Activated CD4-positive, alpha-beta memory T cell treated with anti-CD3 and anti-CD28 coated beads for 36 hours (primary cell): ENCODE measurements at regions of chr1 and their contacts with region 1.

Region 1: DNA sequence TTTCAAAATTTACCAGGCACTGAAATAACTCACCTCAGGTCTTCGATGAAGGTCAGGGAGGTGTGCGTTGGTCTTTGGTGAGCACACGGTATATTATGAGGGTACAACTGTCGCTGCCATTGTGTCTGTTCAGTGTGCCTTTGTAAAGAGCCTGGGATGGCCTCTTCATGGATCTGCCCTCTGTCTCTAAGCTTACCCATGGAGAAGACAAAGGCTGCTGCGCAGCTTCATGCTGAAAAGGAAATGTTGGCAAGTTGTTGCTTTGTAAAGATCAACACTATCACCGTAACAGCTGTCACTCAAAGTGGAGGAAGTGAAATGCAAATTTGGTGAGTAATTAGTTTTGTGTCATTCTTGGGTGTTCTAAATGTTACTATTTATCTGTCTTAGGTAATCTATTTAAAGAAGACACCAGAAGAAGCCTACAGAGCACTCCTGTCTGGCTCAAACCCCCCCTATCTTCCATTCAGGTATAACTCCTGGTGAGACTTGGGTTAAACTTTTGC is 71.6 kb downstream of the CDC14A start:
- DNase-seq: peak; percentile 33
- H3K4me3 Mint-ChIP-seq: peak overlapping the region; percentile 57
- H3K27ac Mint-ChIP-seq: peak overlapping the region; percentile 76
- H3K4me1 Mint-ChIP-seq: peaks cover 72% of the 10 kb centered on the region
- H3K27me3 Mint-ChIP-seq: no peaks in the 10 kb centered on the region

Region 2: DNA sequence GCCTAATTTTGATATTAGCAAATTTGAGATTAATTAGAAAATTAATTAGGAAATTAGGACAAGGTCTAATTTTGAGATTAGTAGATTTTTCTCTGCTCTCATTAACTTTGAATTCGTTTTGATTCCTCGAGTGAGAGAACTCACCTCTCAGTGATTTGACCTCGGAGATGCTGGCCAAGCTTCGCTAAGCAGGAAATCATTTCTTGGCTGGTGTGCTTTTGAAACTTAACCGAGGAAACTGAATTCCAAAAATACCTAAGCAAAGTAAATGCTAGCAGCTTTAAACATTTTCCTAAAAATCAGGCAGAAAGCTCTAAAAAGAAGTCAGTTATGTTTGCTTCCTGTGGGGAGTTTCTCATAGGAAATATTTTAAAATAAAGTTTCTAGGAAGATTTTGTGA is 36.7 kb before region 1 on chr1:
- CTCF ChIA-PET with region 1: interaction called, 6 read pairs
- POLR2A ChIA-PET with region 1: no interaction called
- intact Hi-C with region 1: loop called (anchors 2 kb)
- DNase-seq: no peak
- H3K4me3 Mint-ChIP-seq: peak overlapping the region; percentile 64
- H3K27ac Mint-ChIP-seq: peak overlapping the region; percentile 84
- H3K4me1 Mint-ChIP-seq: peaks cover 83% of the 10 kb centered on the region
- H3K27me3 Mint-ChIP-seq: no peaks in the 10 kb centered on the region

Region 3: DNA sequence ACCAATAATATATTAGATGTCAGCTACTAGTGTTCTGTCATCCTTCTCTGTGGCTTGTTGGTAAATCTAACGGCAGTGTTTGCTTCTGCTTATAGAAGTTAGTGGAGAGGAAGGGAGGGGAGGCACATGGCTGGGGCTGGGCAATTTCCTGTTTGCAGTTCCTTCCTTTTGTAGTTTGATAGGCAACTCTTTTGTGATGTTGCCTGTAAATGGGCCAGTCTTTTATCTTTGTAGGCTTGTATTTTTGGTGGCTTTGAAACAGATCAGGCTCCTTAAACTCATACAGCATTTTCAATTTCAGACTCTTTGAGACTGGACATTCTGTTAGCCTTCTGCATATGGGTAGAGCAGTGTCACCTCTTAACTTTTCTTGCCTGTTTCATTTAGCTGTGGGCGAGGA is 23.5 kb before region 1 on chr1:
- CTCF ChIA-PET with region 1: interaction called, 8 read pairs
- POLR2A ChIA-PET with region 1: interaction called, 6 read pairs
- intact Hi-C with region 1: loop called (anchors 1 kb)
- DNase-seq: peak; percentile 67
- H3K4me3 Mint-ChIP-seq: peak overlapping the region; percentile 53
- H3K27ac Mint-ChIP-seq: peak overlapping the region; percentile 91
- H3K4me1 Mint-ChIP-seq: peaks cover 83% of the 10 kb centered on the region
- H3K27me3 Mint-ChIP-seq: no peaks in the 10 kb centered on the region

Region 4: GRCh38 chr1:100474834-100475233 is 50.9 kb after region 1 on chr1:
- CTCF ChIA-PET with region 1: no interaction called
- POLR2A ChIA-PET with region 1: no interaction called
- intact Hi-C with region 1: no loop called
- DNase-seq: no peak
- H3K4me3 Mint-ChIP-seq: no peak overlapping the region
- H3K27ac Mint-ChIP-seq: peak overlapping the region; percentile 10
- H3K4me1 Mint-ChIP-seq: peaks cover 23% of the 10 kb centered on the region
- H3K27me3 Mint-ChIP-seq: no peaks in the 10 kb centered on the region